OCI-LY7 (cell line): ENCODE measurements at regions of chr17 and their contacts with region 1.

Region 1: GRCh38 chr17:80426681-80427326 is 11.8 kb downstream of the ENDOV start:
- DNase-seq: peak; percentile 89
- H3K4me3 ChIP-seq: no peak overlapping the region
- H3K27ac ChIP-seq: no peak overlapping the region
- H3K4me1 ChIP-seq: peaks cover 10% of the 10 kb centered on the region
- CTCF ChIP-seq: peak; percentile 99

Region 2: GRCh38 chr17:80349151-80349651 is 77.6 kb before region 1 on chr17:
- CTCF ChIA-PET with region 1: no interaction called
- POLR2A ChIA-PET with region 1: no interaction called
- intact Hi-C with region 1: no loop called
- DNase-seq: no peak
- H3K4me3 ChIP-seq: no peak overlapping the region
- H3K27ac ChIP-seq: no peak overlapping the region
- H3K4me1 ChIP-seq: no peaks in the 10 kb centered on the region
- CTCF ChIP-seq: no peak

Region 3: DNA sequence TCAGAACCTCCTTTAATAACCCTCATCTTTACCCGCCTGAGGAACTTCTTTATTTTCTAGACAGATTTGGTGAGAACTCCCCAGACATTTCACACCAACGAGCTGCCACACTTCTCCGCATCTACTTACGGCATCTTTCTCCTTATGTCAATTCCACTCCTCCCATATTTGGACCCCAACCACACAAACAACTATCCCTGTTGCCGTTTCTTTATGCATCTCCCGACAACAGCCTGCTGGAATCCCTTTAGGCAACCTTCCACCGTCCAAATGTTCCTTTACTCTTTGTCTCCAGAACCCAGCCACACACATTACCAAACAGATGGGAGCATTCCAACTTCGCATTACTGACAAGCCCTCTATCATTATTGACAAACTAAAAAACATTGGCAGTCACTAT is 20.7 kb before region 1 on chr17:
- CTCF ChIA-PET with region 1: no interaction called
- POLR2A ChIA-PET with region 1: no interaction called
- intact Hi-C with region 1: no loop called
- DNase-seq: no peak
- H3K4me3 ChIP-seq: no peak overlapping the region
- H3K27ac ChIP-seq: no peak overlapping the region
- H3K4me1 ChIP-seq: no peaks in the 10 kb centered on the region
- CTCF ChIP-seq: no peak

Region 4: GRCh38 chr17:80511222-80512180 is 84.7 kb after region 1 on chr17:
- CTCF ChIA-PET with region 1: no interaction called
- POLR2A ChIA-PET with region 1: no interaction called
- intact Hi-C with region 1: loop called (anchors 1 kb)
- DNase-seq: peak; percentile 79
- H3K4me3 ChIP-seq: no peak overlapping the region
- H3K27ac ChIP-seq: no peak overlapping the region
- H3K4me1 ChIP-seq: peaks cover 3% of the 10 kb centered on the region
- CTCF ChIP-seq: peak; percentile 82

Region 5: DNA sequence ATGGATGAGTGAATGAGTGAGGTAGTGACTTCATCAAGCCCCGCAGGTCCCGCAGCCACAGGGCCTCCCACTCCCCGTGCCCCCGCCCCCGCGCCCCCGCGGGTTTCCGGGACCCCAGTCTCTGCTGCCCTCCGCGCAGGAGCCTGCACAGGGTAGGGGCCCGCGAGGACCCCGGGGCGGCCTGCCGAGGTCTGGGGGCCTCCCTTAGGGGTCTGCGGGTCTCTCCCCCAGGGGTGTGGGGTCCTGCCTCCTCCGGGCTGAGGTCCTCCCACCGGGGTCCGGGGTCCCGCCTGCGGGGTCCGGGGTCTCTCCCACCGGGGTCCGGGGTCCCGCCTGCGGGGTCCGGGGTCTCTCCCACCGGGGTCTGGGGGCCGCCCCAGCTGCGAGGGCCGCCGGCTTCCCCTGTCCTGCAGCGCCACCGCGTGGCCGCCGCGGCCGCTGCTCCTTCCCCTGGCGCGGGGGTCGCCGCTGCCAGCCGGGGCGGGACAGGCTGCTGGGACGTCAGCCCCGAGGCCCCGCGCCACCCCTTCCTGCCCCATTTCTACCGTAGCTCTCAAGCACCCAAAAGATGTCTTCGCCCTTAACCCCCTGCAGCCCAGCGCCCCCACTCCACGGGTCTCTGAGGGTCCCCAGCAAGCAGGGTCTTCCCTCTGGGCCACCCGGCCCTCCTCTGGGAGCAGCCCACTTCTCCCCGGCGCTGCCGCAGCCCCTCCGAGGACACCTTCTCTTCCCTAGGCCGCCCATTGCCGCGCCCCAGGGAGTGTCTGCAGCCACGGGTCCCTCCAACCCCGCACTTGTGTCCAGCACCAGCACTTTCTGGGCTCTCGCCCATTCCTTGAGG is 554.5 kb after region 1 on chr17:
- CTCF ChIA-PET with region 1: no interaction called
- POLR2A ChIA-PET with region 1: no interaction called
- intact Hi-C with region 1: loop called (anchors 2 kb)
- DNase-seq: peak; percentile 51
- H3K4me3 ChIP-seq: no peak overlapping the region
- H3K27ac ChIP-seq: no peak overlapping the region
- H3K4me1 ChIP-seq: no peaks in the 10 kb centered on the region
- CTCF ChIP-seq: peak; percentile 95